ENCODE measurements at regions of chr4 and their contacts with region 1.

Region 1: GRCh38 chr4:40056716-40057585 is at the start of gene N4BP2:
- DNase-seq: peak; percentile 40 to 61
- ATAC-seq: peak; percentile 69
- H3K4me3 ChIP-seq: peak within 1 kb of the TSS; percentile 77 to 99 (median 85)
- H3K27ac ChIP-seq: peak within 1 kb of the TSS; percentile 94 to 99 (median 96)
- H3K4me1 ChIP-seq: peaks cover 3 to 13% of the 10 kb centered on the region in 2 donors
- H3K27me3 ChIP-seq: no peaks in the 10 kb centered on the region
- CTCF ChIP-seq: peak in 4 of 5 experiments; percentile 41 to 87 (median 68)
- POLR2A ChIP-seq: peak; percentile 78 to 87
- total RNA-seq, gene N4BP2: 1.3 to 7.0 (median 3.3) TPM

Region 2: GRCh38 chr4:39458505-39459300 is 598.2 kb before region 1 on chr4 and contains the starts of genes LIAS and RPL9:
- in situ Hi-C with region 1: no loop called
- intact Hi-C with region 1: loop called (anchors 5 kb)
- DNase-seq: peak; percentile 94 to 98
- ATAC-seq: peak; percentile 96 to 98
- H3K4me3 ChIP-seq: peak within 1 kb of the TSS; percentile 86 to 97 (median 90)
- H3K27ac ChIP-seq: peak within 1 kb of the TSS; percentile 90 to 97 (median 95)
- H3K4me1 ChIP-seq: peaks cover 19 to 21% of the 10 kb centered on the region in 2 donors
- H3K27me3 ChIP-seq: no peaks in the 10 kb centered on the region
- CTCF ChIP-seq: peak in 1 of 5 experiments; percentile 18
- POLR2A ChIP-seq: peak; percentile 95 to 96
- total RNA-seq, gene LIAS: 10.3 to 20.2 (median 12.1) TPM
- total RNA-seq, gene RPL9: 2,556 to 3,080 (median 2,834) TPM

Region 3: DNA sequence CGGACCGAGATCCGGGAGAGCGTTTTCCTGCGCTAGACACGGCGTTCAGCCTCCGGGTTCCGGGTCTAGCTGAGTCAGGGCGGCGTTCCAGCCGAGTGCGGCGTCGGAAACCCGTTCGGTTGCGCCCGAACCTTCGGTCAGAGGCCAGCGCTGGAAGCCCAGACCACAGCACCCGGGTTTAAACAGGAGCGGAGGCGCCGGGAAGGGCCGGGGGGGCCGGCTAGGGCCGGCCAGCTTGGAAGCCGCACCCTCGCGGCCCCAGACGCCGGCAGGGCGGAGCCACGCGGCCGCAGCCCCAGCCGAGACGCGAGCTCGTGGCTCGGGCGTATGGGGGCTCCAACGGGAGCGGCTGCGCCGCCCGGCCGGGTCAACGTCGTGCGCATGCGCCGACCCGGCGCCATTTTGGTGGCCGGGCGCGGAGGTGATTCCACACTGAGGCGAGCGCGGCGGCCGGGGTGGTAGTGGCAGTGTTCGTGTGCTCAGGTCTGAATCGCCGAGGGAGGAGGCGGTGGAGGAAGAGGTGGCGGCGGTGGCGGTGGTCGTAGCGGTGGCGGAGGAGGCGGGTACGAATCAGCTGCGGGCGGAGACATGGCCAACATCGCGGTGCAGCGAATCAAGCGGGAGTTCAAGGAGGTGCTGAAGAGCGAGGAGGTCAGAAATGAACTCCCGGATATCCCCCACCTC is 359.1 kb before region 1 on chr4 and contains the start of gene UBE2K:
- in situ Hi-C with region 1: no loop called
- intact Hi-C with region 1: loop called (anchors 1 kb)
- DNase-seq: peak; percentile 70 to 83
- ATAC-seq: peak; percentile 81 to 84
- H3K4me3 ChIP-seq: peak within 1 kb of the TSS; percentile 59 to 93 (median 84)
- H3K27ac ChIP-seq: peak within 1 kb of the TSS; percentile 87 to 97 (median 96)
- H3K4me1 ChIP-seq: peaks cover 32 to 35% of the 10 kb centered on the region in 2 donors
- H3K27me3 ChIP-seq: no peaks in the 10 kb centered on the region
- CTCF ChIP-seq: no peak
- POLR2A ChIP-seq: peak; percentile 90 to 93
- total RNA-seq, gene UBE2K: 28.7 to 38.8 (median 32.1) TPM

Region 4: DNA sequence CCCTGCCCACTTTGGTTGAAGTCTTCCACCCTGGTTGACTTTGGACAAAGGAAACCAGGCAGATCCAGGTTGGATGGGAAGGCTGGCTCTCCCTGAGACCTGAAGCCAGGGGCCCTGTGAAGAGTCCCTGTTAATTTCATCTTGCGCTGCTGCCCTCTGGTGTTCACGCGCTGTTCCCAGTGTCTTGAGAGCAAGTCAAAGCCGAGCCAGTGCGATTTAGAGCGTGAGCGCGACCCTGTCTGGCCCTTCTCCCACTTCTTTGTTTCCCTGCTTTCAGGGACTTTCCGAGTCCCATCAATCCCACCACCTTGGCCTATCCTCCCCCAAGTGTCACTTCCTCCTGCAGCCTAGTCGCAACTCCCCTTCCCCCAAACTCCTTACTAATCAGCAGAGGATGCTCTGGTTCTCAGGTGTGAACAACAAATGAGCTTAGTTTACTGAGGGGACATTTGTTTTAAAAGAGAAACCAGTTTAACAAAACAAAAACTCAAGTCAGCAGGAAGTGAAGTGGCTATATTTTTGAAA is 252.4 kb after region 1 on chr4:
- in situ Hi-C with region 1: loop called (anchors 10 to 25 kb)
- intact Hi-C with region 1: loop called (anchors 2 kb)
- DNase-seq: peak; percentile 49 to 61
- ATAC-seq: peak; percentile 68 to 71
- H3K4me3 ChIP-seq: no peak overlapping the region
- H3K27ac ChIP-seq: no peak overlapping the region
- H3K4me1 ChIP-seq: no peaks in the 10 kb centered on the region
- H3K27me3 ChIP-seq: no peaks in the 10 kb centered on the region
- CTCF ChIP-seq: peak; percentile 57 to 83 (median 73)
- POLR2A ChIP-seq: no peak

Region 5: DNA sequence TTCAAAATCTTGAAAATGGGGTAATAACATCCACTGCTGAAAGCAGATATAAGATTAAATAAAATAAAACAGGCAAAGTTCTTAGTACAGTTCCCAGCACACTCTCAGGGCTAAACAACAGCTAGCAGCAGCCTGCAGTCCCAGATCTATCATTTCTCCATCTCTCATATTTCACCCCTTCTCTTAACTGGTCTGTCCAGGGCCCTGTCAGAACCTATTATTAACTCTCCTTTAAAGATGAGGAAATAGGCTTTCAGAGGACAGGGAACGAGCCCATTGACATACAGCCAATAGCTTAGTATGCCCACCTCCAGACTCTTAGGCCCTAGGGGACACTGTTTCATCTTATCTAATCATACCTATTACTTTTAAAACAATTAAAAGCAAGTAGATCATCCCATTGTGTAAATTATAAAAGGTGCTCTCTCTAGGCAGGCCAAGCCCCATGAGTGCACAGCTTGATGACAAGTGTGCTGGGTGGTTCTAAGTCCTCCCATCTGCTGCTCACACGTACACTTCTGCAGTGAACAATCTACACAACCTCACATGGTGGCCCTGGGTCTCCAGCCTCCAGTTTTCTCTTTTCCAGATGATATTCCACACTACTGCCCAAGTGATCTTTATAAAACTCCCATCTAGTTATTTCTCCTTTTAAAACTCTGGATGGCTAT is 1038.4 kb after region 1 on chr4:
- in situ Hi-C with region 1: no loop called
- intact Hi-C with region 1: no loop called
- DNase-seq: peak in 1 of 2 donors; percentile 20
- ATAC-seq: peak; percentile 92 to 96
- H3K4me3 ChIP-seq: no peak overlapping the region
- H3K27ac ChIP-seq: peak overlapping the region; percentile 58 to 74 (median 66)
- H3K4me1 ChIP-seq: peaks cover 7 to 29% of the 10 kb centered on the region in 2 donors
- H3K27me3 ChIP-seq: no peaks in the 10 kb centered on the region
- CTCF ChIP-seq: no peak
- POLR2A ChIP-seq: no peak